ENCODE measurements at regions of chr3 and their contacts with region 1.

Region 1: DNA sequence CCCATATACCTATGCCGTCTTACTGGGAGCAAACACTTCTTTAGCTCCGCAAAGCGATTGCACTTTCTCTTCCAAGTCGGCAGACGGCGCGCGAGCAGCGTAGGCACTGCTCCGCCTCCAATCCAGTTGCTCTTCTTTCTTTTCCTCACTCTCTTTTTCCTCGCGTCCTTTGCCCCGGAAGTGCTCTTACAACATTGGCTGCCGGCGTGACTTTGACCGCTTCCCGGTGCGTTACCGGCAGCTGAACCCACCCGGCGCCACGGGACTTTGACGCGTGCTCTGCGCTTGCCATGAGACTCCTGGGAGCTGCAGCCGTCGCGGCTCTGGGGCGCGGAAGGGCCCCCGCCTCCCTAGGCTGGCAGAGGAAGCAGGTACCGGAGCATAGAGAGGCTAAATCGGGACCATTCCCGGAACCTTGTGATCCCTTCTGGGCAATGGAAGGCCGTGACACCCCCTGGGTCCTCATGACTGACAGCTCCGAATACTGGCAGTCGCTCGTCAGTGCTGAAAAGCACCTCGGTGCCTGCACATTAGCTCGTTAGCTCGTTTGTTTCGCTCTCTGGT is at the start of gene GFM1:
- DNase-seq: peak; percentile 83
- ATAC-seq: peak; percentile 97
- H3K4me3 ChIP-seq: peak within 1 kb of the TSS; percentile 72
- H3K27ac ChIP-seq: peak within 1 kb of the TSS; percentile 75
- H3K4me1 ChIP-seq: no peaks in the 10 kb centered on the region
- H3K27me3 ChIP-seq: no peaks in the 10 kb centered on the region
- CTCF ChIP-seq: peak; percentile 96 to 99 (median 98); a peak in 5 of 6 replicates
- EP300 ChIP-seq: 0 out of 4 replicates have a peak, but pooled peaks of 1 of the 2 experiments have one; percentile 33
- POLR2A ChIP-seq: peak; percentile 95
- RAD21 ChIP-seq: no peak
- polyA plus RNA-seq, gene GFM1: 36.9 to 43.1 TPM

Region 2: DNA sequence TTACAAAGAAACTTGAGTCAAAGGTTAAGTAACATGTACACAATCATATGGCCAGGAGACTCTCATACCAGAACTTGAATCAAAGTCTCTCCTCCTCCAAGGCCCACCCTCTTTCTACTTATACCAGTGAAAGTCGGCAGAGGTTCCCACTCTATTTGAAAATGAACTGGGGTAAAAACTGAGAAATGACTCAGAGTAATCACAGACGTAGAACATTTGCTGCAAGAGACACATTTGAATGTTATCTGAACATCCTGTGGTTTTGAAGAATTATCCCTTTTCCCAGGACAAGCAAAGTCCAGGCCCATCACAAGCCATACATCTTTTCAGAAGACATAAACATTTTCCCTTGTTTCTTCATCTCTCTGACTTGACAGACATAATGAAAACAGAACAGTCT is 594.0 kb before region 1 on chr3:
- CTCF ChIA-PET with region 1: no interaction called
- POLR2A ChIA-PET with region 1: no interaction called
- RAD21 ChIA-PET with region 1: no interaction called
- SMC1A ChIA-PET with region 1: no interaction called
- in situ Hi-C with region 1: no loop called
- intact Hi-C with region 1: no loop called
- DNase-seq: no peak
- ATAC-seq: peak; percentile 24; the same call in 1 of the 3 replicates
- H3K4me3 ChIP-seq: no peak overlapping the region
- H3K27ac ChIP-seq: no peak overlapping the region
- H3K4me1 ChIP-seq: no peaks in the 10 kb centered on the region
- H3K27me3 ChIP-seq: no peaks in the 10 kb centered on the region
- CTCF ChIP-seq: no peak
- EP300 ChIP-seq: no peak
- POLR2A ChIP-seq: no peak
- RAD21 ChIP-seq: no peak

Region 3: GRCh38 chr3:158672293-158673176 is 28.1 kb after region 1 on chr3 and contains the start of gene LXN:
- CTCF ChIA-PET with region 1: interaction called, 21 read pairs
- POLR2A ChIA-PET with region 1: interaction called, 5 read pairs
- RAD21 ChIA-PET with region 1: no interaction called
- SMC1A ChIA-PET with region 1: interaction called, 4 read pairs
- in situ Hi-C with region 1: no loop called
- intact Hi-C with region 1: no loop called
- DNase-seq: peak; percentile 56
- ATAC-seq: peak; percentile 99
- H3K4me3 ChIP-seq: peak within 1 kb of the TSS; percentile 78
- H3K27ac ChIP-seq: peak within 1 kb of the TSS; percentile 75
- H3K4me1 ChIP-seq: peaks cover 4% of the 10 kb centered on the region; the same call in 1 of the 2 replicates
- H3K27me3 ChIP-seq: no peaks in the 10 kb centered on the region
- CTCF ChIP-seq: peak; percentile 56 to 83 (median 82)
- EP300 ChIP-seq: no peak
- POLR2A ChIP-seq: peak; percentile 88
- RAD21 ChIP-seq: peak; percentile 38; the same call in 1 of the 2 replicates
- polyA plus RNA-seq, gene LXN: 30.7 to 45.0 TPM

Region 4: GRCh38 chr3:158702815-158703481 is 58.5 kb after region 1 on chr3:
- CTCF ChIA-PET with region 1: no interaction called
- POLR2A ChIA-PET with region 1: no interaction called
- RAD21 ChIA-PET with region 1: no interaction called
- SMC1A ChIA-PET with region 1: no interaction called
- in situ Hi-C with region 1: no loop called
- intact Hi-C with region 1: no loop called
- DNase-seq: no peak
- ATAC-seq: no peak
- H3K4me3 ChIP-seq: no peak overlapping the region
- H3K27ac ChIP-seq: no peak overlapping the region
- H3K4me1 ChIP-seq: no peaks in the 10 kb centered on the region
- H3K27me3 ChIP-seq: no peaks in the 10 kb centered on the region
- CTCF ChIP-seq: no peak
- EP300 ChIP-seq: no peak
- POLR2A ChIP-seq: no peak
- RAD21 ChIP-seq: no peak

Measured in GM12878 (cell line).